GM23248 (cell line): ENCODE measurements at regions of chr12 and their contacts with region 1.

Region 1: DNA sequence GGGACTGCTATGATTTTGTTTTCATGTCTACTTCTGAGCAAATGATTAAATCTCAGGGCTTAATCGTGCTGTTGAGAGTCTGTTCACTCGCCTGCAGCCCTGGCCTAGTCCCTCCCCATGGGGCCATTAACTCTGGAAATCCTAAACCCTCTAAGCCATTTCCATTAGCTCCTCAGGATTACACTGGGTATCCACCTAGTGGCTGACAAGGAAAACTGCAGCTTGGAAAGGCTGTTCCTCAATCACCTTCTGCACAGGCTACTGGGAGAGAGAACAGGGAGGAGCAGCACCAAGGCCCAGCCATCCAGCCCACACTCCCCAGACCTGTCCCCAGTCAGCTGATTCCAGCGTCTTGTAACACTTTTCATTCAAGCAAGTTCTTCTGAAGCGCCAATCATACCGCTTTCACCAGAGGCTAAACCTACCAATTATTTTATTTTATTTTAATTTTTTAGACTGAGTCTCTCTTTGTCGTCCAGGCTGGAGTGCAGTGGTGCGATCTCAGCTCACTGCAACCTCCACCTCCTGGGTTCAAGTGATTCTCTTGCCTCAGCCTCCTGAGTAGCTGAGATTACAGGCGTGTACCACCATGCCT is 48.7 kb downstream of the NEUROD4 start:
- DNase-seq: peak; percentile 70
- H3K4me3 ChIP-seq: no peak overlapping the region
- H3K27ac ChIP-seq: no peak overlapping the region
- H3K4me1 ChIP-seq: no peaks in the 10 kb centered on the region
- H3K27me3 ChIP-seq: peaks cover 30% of the 10 kb centered on the region

Region 2: DNA sequence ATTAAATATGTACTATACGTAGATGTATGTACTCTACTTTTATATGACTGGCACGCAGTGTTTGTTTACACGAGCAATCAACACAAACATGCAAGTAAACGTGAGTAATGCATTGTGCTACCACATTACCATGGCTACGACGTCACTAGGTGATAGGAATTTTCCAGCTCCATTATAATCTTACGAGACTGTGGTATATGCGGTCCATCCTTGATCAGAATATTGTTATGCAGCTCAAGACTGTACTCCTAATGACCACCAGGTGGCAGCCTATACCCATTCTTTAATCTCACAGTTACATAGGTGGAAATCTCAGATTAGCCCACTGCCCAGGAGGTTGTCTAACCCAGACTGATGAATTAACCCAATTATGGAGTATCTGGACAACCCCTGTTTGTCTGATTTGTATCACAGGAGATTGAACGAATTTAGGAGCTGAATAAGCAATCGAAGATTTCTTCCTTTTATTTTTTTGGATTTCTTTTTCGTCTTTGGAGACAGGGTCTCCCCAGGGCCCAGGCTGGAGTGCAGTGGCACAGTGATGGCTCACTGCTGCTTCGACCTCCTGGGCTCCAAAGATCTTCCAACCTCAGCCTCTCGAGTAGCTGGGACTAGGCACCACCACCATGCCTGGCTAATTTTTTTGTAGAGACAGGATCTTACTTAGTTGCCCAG is 75.2 kb before region 1 on chr12:
- in situ Hi-C with region 1: loop called (anchors 10 kb)
- DNase-seq: peak; percentile 67
- H3K4me3 ChIP-seq: no peak overlapping the region
- H3K27ac ChIP-seq: no peak overlapping the region
- H3K4me1 ChIP-seq: no peaks in the 10 kb centered on the region
- H3K27me3 ChIP-seq: peaks cover 21% of the 10 kb centered on the region